ENCODE measurements at regions of chr2 and their contacts with region 1.

Region 1: GRCh38 chr2:232333361-232334270 is 44.9 kb upstream of the ALPP start:
- DNase-seq: peak; percentile 36
- H3K4me3 Mint-ChIP-seq: no peak overlapping the region
- H3K27ac Mint-ChIP-seq: no peak overlapping the region
- H3K4me1 Mint-ChIP-seq: no peaks in the 10 kb centered on the region
- H3K27me3 Mint-ChIP-seq: no peaks in the 10 kb centered on the region

Region 2: GRCh38 chr2:232348936-232349335 is 15.3 kb after region 1 on chr2:
- CTCF ChIA-PET with region 1: no interaction called
- DNase-seq: peak; percentile 59
- H3K4me3 Mint-ChIP-seq: no peak overlapping the region
- H3K27ac Mint-ChIP-seq: no peak overlapping the region
- H3K4me1 Mint-ChIP-seq: peaks cover 7% of the 10 kb centered on the region
- H3K27me3 Mint-ChIP-seq: peaks cover 66% of the 10 kb centered on the region

Region 3: GRCh38 chr2:232365621-232366321 is 32.2 kb after region 1 on chr2:
- CTCF ChIA-PET with region 1: interaction called, 41 read pairs
- DNase-seq: peak; percentile 48
- H3K4me3 Mint-ChIP-seq: no peak overlapping the region
- H3K27ac Mint-ChIP-seq: peak overlapping the region; percentile 60
- H3K4me1 Mint-ChIP-seq: peaks cover 38% of the 10 kb centered on the region
- H3K27me3 Mint-ChIP-seq: peaks cover 16% of the 10 kb centered on the region

Region 4: DNA sequence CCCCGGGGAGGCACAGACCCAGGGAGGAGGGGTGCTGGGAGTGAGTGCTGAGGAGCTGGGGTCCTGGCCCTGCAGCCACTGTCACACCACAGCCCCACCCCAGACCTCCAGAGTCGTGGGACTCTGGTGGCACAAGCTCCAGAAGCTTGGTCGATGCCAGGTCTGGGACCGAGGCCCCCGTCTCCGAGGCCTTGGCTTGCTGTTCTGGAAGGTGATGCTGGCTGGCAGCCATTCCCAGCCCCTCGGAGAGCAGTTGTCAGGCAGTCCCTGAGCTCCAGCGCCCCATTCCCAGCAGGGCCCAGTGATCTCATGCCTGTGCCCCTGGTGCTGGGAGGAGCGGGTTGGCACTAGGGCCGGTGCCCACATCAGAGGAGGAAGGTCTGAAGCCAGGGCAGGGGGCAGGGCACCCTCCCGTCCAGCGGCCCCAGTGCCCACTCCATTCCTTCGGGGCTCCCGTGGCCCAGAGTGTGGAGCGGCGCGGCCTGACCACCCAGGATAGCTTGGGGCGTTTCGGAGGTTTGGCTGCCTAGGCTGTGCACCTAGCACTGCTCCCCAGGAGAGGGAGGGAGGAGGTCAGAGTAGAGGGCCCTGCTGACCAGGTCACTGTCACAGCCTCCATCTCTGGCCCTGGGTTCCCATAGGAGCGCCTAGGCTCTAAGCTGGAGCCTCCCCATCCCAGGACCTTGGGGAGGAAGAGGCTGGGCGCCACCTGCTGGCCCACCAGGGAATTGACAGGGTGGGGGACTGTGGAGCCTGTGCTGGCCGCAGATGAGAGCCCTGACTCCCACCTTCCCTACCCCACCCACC is 105.5 kb after region 1 on chr2:
- CTCF ChIA-PET with region 1: interaction called, 11 read pairs
- DNase-seq: peak; percentile 60
- H3K4me3 Mint-ChIP-seq: no peak overlapping the region
- H3K27ac Mint-ChIP-seq: no peak overlapping the region
- H3K4me1 Mint-ChIP-seq: no peaks in the 10 kb centered on the region
- H3K27me3 Mint-ChIP-seq: peaks cover 21% of the 10 kb centered on the region

Measured in activated naive CD4-positive, alpha-beta T cell treated with anti-CD3 and anti-CD28 coated beads, Interleukin-2, amount 10 ng/mL, durations not matched to agents 7 days and 5 days (primary cell).